Heart right ventricle (tissue), 16 donors: ENCODE measurements at regions of chr15 and their contacts with region 1.

Region 1: DNA sequence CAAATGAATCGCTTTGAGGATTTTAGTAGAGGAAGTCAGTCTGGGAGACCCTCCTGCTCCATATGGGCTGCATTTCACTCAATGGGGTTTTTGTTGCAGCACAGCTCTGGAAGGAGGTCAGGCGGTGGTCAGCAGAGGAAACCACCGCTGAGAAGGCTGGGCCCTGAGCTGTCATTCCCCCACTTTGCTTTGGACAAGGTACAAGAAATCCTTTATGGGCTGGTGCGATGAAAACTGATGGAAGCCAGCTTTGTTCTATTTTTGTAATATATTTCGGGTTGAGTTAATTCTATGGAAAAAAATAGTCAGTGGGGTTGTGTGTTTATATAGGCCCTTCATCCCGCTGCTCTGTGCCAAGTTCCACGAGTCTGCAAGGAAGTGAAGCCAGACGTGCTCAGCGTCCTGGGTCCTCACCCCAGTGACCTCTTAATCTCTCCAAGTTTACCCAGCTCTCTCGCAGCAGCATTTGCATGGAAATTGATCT is 157.1 kb upstream of the TMC3 start:
- DNase-seq: peak; percentile 15
- ATAC-seq: peak in 4 of 8 donors; percentile 50 to 65 (median 58)
- H3K4me3 ChIP-seq: no peak overlapping the region
- H3K27ac ChIP-seq: no peak overlapping the region
- H3K4me1 ChIP-seq: peaks cover 0 to 22% (median 13%) of the 10 kb centered on the region in 9 donors
- H3K27me3 ChIP-seq: no peaks in the 10 kb centered on the region
- CTCF ChIP-seq: no peak

Region 2: GRCh38 chr15:81473177-81473576 is 58.0 kb before region 1 on chr15:
- intact Hi-C with region 1: loop called in 1 of 10 experiments (anchors 10 kb)
- DNase-seq: no peak
- ATAC-seq: peak in 2 of 8 donors; percentile 28 to 65
- H3K4me3 ChIP-seq: no peak overlapping the region
- H3K27ac ChIP-seq: no peak overlapping the region
- H3K4me1 ChIP-seq: peaks cover 0 to 18% (median 0%) of the 10 kb centered on the region in 9 donors
- H3K27me3 ChIP-seq: no peaks in the 10 kb centered on the region
- CTCF ChIP-seq: no peak

Region 3: GRCh38 chr15:81511138-81511537 is 20.0 kb before region 1 on chr15:
- intact Hi-C with region 1: loop called in 1 of 10 experiments (anchors 1 kb)
- DNase-seq: no peak
- ATAC-seq: no peak
- H3K4me3 ChIP-seq: no peak overlapping the region
- H3K27ac ChIP-seq: no peak overlapping the region
- H3K4me1 ChIP-seq: no peaks in the 10 kb centered on the region
- H3K27me3 ChIP-seq: no peaks in the 10 kb centered on the region
- CTCF ChIP-seq: no peak